ENCODE measurements at regions of chr4 and their contacts with region 1.

Region 1: DNA sequence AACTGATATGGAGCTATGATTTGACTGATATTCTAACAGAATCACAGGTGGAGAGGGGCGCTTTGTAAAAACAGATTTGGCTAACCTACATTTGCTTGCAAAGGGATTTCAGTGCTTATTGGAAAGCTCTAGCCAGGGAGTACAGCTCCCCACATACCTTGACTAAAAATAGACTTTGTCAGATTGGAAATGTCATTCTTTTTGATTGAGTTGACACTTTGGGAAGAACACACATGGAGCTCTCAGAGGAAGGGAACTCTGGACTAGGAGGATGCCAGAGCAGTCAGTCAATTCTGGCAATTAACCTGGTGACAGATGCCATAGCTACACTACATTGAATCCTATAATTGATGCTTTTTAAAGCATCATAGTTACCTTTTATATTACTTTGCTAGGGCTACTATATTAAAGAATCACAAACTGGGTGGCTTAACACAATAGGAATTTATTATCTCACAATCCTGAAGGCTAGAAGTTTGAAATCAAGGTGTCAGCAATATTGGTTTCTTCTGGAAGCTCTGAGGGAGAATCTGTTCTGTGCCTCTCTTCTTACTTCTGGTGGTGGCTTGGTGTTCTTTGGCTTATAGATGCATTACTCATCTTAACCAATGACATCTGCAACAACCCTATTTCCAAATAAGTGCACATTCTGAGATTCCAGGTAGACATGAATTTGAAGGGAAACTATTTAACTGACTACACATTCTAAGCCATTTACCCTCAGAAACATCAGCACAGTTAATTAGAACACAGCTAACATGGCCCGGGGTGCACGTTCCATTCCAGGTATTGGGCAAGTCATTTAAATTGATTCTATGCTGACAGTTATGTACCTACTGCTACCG is 8.4 kb upstream of the HERC3 start:
- DNase-seq: no peak

Region 2: GRCh38 chr4:88284439-88285234 is 299.2 kb before region 1 on chr4 and contains the start of gene PPM1K:
- intact Hi-C with region 1: no loop called
- DNase-seq: peak; percentile 100
- total RNA-seq, gene PPM1K: 23.8 to 31.6 TPM

Region 3: DNA sequence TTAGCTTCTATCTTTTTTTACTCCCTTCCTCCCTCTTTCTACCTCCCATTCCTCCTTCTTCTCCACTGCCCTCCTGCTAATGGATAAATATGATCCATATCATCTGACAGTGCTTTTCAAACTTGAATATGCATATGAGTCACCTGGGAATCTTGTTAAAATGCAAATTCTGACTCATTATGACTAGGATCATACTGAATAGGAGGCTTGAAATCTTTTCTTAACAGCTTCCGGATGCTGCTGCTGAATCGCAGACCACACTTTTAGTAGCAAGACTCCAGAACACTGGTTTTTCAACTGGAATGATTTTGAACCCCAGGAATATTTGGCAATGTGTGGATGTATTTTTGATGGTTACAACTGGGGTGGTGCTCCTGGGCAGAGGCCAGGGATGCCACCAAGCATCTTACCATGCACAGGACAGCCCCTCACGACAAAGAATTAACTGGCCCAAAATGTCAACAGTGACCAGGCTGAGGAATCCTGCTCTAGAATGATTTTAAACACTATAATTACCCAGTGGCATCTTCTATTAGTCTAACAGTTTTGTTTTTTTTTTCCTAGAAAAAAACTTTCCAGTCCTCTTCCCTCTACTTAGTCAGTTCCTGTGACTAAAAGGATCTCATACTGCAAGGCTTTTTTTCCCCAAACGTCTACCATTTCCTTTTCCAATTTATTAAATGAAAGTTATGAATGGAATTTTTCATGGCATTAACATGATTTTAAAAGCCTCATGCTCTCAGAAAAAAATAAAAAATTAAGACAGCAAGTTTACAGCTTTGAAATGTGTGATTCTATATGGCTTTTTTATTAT is 49.7 kb before region 1 on chr4:
- intact Hi-C with region 1: loop called in 1 of 2 experiments (anchors 10 kb)
- DNase-seq: no peak

Region 4: GRCh38 chr4:88646528-88647280 is 62.9 kb after region 1 on chr4:
- intact Hi-C with region 1: no loop called
- DNase-seq: no peak

Region 5: GRCh38 chr4:89123451-89123851 is 539.6 kb after region 1 on chr4:
- intact Hi-C with region 1: no loop called
- DNase-seq: no peak

Measured in posterior vena cava (tissue), 2 donors.